Naive thymus-derived CD4-positive, alpha-beta T cell (primary cell): ENCODE measurements at regions of chr6 and their contacts with region 1.

Region 1: DNA sequence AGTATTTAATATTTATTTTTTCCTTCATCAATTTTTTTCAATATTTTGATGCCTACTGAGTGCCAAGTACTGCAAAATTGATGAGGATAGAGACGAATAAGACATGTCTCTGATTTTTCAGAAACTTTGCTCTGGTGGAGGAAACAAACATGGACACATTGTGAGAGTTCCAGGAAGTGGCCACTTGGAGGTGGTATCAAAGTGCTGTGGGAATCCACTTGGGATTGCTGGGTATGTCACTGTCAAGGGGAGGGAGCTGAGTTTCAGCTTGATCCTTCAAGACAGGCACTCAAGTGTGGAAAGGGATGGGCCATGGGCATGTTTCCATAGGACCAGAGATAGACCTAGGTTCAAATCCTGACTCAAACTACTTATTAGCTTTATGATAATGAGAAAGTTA is 24.5 kb upstream of the ABCC10 start:
- DNase-seq: no peak
- ATAC-seq: no peak
- H3K4me3 ChIP-seq: no peak overlapping the region
- H3K4me3 Mint-ChIP-seq: no peak overlapping the region
- H3K27ac ChIP-seq: no peak overlapping the region
- H3K27ac Mint-ChIP-seq: no peak overlapping the region
- H3K4me1 ChIP-seq: no peaks in the 10 kb centered on the region
- H3K4me1 Mint-ChIP-seq: peaks cover 0 to 3% (median 0%) of the 10 kb centered on the region in 7 donors
- H3K27me3 ChIP-seq: no peaks in the 10 kb centered on the region
- H3K27me3 Mint-ChIP-seq: peaks cover 4 to 56% (median 23%) of the 10 kb centered on the region in 5 donors

Region 2: DNA sequence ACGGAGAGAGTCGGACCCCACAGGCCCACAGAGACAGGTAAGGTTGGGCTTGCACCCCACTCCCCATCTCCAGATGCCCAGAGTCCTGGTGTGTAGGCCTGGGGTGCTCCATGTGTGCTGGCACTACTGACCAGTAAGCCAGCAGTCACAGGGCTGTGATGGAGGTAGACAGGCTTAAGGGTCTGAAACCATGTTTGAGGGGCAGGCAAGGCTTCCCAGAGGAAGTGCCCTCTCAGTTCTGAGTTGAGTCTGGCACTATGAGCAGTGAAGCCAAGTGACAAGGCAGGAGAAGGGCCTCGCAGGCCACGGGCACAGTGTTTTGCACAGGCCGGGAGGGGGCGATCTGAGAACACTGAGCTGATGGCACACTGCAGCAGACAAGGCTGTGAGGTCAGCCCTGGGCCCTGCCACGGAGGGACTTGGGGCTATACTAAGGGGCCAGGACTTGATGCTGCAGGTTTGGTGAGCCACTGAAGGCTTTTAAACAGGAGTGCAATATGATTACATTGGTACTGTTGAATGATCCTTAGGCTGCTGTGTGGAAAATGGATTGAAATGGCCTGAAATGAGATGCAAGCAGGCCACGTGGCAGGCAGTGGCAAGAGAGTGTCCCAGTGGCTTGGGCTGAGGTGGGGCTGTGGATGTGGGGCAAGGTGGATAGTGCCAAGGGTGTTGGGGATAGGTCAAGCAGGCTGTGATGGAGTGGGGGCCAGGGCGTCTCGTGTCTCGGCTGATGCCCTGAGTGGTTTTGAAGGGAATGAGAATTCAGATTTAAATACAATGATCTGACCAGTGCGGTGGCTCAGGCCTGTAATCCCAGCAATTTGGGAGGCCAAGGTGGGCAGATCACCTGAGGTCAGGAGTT is 139.3 kb before region 1 on chr6:
- CTCF ChIA-PET with region 1: interaction called, 13 read pairs
- POLR2A ChIA-PET with region 1: no interaction called
- intact Hi-C with region 1: loop called (anchors 1 kb)
- DNase-seq: peak; percentile 49 to 74 (median 66)
- ATAC-seq: peak; percentile 93
- H3K4me3 ChIP-seq: no peak overlapping the region
- H3K4me3 Mint-ChIP-seq: peak overlapping the region in 1 of 10 donors; percentile 53
- H3K27ac ChIP-seq: no peak overlapping the region
- H3K27ac Mint-ChIP-seq: peak overlapping the region in 2 of 9 donors; percentile 4 to 43
- H3K4me1 ChIP-seq: no peaks in the 10 kb centered on the region
- H3K4me1 Mint-ChIP-seq: peaks cover 0 to 17% (median 0%) of the 10 kb centered on the region in 7 donors
- H3K27me3 ChIP-seq: no peaks in the 10 kb centered on the region
- H3K27me3 Mint-ChIP-seq: peaks cover 0 to 17% (median 0%) of the 10 kb centered on the region in 5 donors

Region 3: DNA sequence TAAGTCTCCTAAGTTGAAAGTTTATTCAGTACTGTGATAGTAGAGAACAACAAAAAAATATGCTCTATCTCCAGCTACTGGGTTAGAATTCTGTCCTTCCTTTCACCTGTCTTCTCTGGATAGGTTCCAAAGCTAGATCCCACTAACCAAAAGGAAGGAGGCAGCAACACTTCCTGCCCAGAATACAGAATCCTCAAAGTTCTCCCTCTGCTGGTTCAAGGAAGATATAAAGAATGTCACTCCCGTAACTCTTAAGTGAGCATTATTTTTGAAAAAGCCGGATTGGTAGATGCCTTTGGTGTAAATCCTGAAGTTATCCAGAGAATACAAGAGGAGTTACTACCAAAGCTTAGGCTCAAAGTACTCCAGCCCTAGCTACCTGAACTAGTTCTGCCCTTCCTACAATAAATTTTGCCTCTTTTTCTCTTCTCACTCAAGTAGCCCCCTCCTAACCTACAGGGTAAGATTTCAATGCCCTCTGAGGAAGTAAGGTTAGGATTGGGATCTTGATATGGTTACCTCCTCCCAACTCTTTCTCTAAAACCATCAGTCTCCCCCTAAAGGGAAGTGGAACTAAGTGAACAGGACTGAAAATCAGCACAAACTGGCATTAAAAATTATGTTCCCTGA is 68.2 kb before region 1 on chr6:
- CTCF ChIA-PET with region 1: interaction called, 4 read pairs
- POLR2A ChIA-PET with region 1: no interaction called
- intact Hi-C with region 1: loop called in 1 of 2 experiments (anchors 1 kb)
- DNase-seq: peak in 1 of 9 donors; percentile 24
- ATAC-seq: no peak
- H3K4me3 ChIP-seq: no peak overlapping the region
- H3K4me3 Mint-ChIP-seq: no peak overlapping the region
- H3K27ac ChIP-seq: no peak overlapping the region
- H3K27ac Mint-ChIP-seq: peak overlapping the region in 5 of 9 donors; percentile 8 to 65 (median 32)
- H3K4me1 ChIP-seq: peaks cover 0 to 15% of the 10 kb centered on the region in 2 donors
- H3K4me1 Mint-ChIP-seq: peaks cover 10 to 38% (median 22%) of the 10 kb centered on the region in 7 donors
- H3K27me3 ChIP-seq: no peaks in the 10 kb centered on the region
- H3K27me3 Mint-ChIP-seq: peaks cover 0 to 3% (median 0%) of the 10 kb centered on the region in 5 donors

Region 4: DNA sequence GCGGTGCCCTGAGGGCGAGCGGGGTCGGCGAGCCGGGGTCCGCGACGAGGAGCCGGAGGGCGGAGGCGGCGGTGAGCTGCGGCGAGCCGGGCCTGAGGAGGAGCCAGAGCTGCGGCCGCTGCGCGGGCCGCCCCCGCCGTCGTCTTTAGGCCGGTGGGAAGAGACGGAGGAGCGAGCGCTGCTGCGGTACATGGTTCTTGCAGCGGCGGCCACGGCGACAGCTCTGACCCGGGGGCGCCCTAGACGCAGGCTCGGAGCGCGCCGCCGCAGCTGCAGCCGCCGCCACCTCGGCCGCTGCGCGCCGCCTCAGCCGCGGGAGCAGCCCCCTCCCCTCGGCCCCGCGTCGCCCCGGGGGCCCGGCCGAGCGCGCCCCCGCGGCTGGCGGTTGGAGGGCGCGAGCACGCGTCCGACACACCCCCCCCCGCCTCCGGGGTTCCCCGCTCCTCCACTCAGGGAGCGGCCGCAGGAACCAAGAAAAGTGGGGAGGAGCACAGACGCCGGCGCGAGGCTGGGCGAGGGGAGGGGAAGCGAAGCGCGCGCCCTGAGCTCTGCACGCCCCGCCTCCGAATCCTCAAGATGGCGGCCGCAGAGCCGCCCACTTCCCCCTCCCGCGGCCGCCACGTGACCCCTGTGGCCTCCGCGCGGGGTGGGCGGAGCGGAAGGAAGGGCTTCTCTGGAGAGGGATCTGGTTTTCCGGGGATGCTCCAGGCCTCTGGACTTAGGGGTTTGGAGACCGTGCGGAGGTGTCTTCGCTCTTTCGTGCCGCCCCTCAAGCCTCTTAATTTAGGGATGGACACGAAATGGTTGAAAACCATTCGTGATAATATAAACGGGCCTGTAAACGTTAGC is 33.4 kb before region 1 on chr6 and contains the start of gene ZNF318:
- CTCF ChIA-PET with region 1: interaction called, 5 read pairs
- POLR2A ChIA-PET with region 1: interaction called, 8 read pairs
- intact Hi-C with region 1: loop called in 1 of 2 experiments (anchors 1 kb)
- DNase-seq: peak; percentile 85 to 95 (median 93)
- ATAC-seq: peak; percentile 97
- H3K4me3 ChIP-seq: peak within 1 kb of the TSS; percentile 90
- H3K4me3 Mint-ChIP-seq: peak within 1 kb of the TSS; percentile 75 to 97 (median 92)
- H3K27ac ChIP-seq: peak within 1 kb of the TSS; percentile 87
- H3K27ac Mint-ChIP-seq: peak within 1 kb of the TSS; percentile 91 to 98 (median 95)
- H3K4me1 ChIP-seq: peaks cover 20 to 23% of the 10 kb centered on the region in 2 donors
- H3K4me1 Mint-ChIP-seq: peaks cover 28 to 56% (median 50%) of the 10 kb centered on the region in 7 donors
- H3K27me3 ChIP-seq: no peaks in the 10 kb centered on the region
- H3K27me3 Mint-ChIP-seq: peaks cover 0 to 17% (median 0%) of the 10 kb centered on the region in 5 donors
- total RNA-seq, gene ZNF318: 15.8 to 40.2 (median 28.3) TPM

Region 5: GRCh38 chr6:43506667-43507471 is 104.0 kb after region 1 on chr6:
- CTCF ChIA-PET with region 1: interaction called, 3 read pairs
- POLR2A ChIA-PET with region 1: no interaction called
- intact Hi-C with region 1: loop called in 1 of 2 experiments (anchors 1 kb)
- DNase-seq: peak; percentile 61 to 82 (median 70)
- ATAC-seq: peak; percentile 84
- H3K4me3 ChIP-seq: no peak overlapping the region
- H3K4me3 Mint-ChIP-seq: peak overlapping the region in 1 of 10 donors; percentile 29
- H3K27ac ChIP-seq: no peak overlapping the region
- H3K27ac Mint-ChIP-seq: peak overlapping the region in 5 of 9 donors; percentile 24 to 69 (median 58)
- H3K4me1 ChIP-seq: peaks cover 0 to 4% of the 10 kb centered on the region in 2 donors
- H3K4me1 Mint-ChIP-seq: peaks cover 10 to 29% (median 20%) of the 10 kb centered on the region in 7 donors
- H3K27me3 ChIP-seq: peaks cover 0 to 9% of the 10 kb centered on the region in 2 donors
- H3K27me3 Mint-ChIP-seq: peaks cover 15 to 22% (median 19%) of the 10 kb centered on the region in 5 donors